ENCODE measurements at regions of chr1 and their contacts with region 1.

Region 1: GRCh38 chr1:198157241-198157846 is 546 bp downstream of the NEK7 start:
- DNase-seq: peak; percentile 87
- ATAC-seq: peak; percentile 50
- H3K4me3 ChIP-seq: peak overlapping the region; percentile 81
- H3K27ac ChIP-seq: peak overlapping the region; percentile 38
- H3K4me1 ChIP-seq: peaks cover 32% of the 10 kb centered on the region
- H3K27me3 ChIP-seq: no peaks in the 10 kb centered on the region
- CTCF ChIP-seq: no peak

Region 2: GRCh38 chr1:197775282-197776262 is 381.8 kb before region 1 on chr1 and contains the start of gene DENND1B:
- CTCF ChIA-PET with region 1: interaction called, 4 read pairs
- POLR2A ChIA-PET with region 1: no interaction called
- intact Hi-C with region 1: loop called (anchors 5 kb)
- DNase-seq: peak; percentile 66
- ATAC-seq: peak; percentile 52
- H3K4me3 ChIP-seq: peak within 1 kb of the TSS; percentile 75
- H3K27ac ChIP-seq: peak within 1 kb of the TSS; percentile 97
- H3K4me1 ChIP-seq: peaks cover 33% of the 10 kb centered on the region
- H3K27me3 ChIP-seq: no peaks in the 10 kb centered on the region
- CTCF ChIP-seq: no peak
- total RNA-seq, gene DENND1B: 7.4 and 10.9 TPM in 2 replicates

Region 3: DNA sequence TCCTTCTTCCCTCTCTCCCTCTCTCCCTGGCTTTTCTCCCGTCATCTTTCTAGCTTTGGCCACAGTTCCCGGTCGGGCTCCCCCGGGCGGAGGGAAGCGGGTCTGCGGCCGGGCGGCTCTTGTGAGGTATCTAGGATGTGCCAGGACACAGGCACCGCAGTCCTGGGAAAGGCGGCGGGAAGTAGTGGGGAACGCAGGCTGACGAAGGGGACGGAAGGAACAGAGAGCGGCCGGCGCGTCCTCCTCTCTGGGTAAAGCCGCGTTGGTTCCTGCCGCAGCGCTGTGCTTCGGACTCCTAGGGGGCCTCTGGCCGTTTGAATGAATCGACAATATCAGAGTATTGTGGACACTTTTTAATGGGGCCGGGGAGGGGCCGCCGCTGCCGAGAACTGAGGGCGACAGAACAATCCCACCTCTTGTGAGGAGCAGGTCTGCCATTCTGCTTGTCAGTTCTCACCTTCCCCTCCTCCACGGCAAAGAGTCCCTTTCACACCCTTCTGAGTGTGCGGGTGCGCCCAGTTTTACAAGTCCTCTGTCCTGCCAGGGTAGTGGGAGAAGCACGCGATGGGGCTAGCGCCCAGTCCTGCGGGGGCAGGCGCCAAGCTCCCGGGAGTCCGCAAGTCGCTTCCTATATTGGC is 241.4 kb before region 1 on chr1:
- CTCF ChIA-PET with region 1: no interaction called
- POLR2A ChIA-PET with region 1: no interaction called
- intact Hi-C with region 1: loop called (anchors 5 kb)
- DNase-seq: peak; percentile 79
- ATAC-seq: peak; percentile 83
- H3K4me3 ChIP-seq: peak overlapping the region; percentile 81
- H3K27ac ChIP-seq: no peak overlapping the region
- H3K4me1 ChIP-seq: peaks cover 4% of the 10 kb centered on the region; the same call in 1 of the 2 replicates
- H3K27me3 ChIP-seq: no peaks in the 10 kb centered on the region
- CTCF ChIP-seq: peak; percentile 70

Region 4: DNA sequence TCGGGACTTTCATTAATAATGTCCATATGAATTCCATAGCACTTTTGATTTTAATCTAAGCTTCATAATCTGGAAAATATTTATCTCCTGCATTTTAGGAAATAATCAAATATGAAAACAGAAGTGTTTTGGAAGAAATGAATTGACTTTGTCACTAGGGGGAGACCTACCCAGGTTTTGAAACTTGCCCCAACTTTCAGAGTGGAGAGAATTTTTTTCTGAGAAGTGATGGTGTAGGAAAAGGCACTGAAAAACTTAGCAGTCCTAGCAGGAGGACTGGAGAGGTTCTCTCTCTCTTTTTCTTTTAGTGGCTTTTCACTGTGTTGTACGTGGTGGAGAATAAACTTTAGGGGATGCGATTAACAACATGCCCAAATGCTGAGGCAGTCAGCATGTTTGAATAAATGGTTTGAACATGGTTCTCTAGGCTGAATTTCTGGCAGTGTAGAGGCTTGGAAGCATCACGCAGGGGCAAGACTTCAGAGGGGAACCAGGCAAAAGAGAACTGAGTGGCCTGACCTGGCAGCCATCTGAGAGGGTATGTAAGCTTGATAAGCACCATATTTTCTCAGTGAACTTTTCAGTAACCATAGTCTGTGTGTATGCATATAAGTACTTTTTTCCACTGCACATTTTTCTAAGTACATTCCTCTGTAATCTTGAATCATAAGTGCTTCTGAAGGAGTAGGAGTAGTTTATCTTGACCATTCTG is 68.8 kb before region 1 on chr1:
- CTCF ChIA-PET with region 1: no interaction called
- POLR2A ChIA-PET with region 1: no interaction called
- intact Hi-C with region 1: loop called (anchors 2 kb)
- DNase-seq: peak; percentile 56
- ATAC-seq: peak; percentile 55
- H3K4me3 ChIP-seq: no peak overlapping the region
- H3K27ac ChIP-seq: no peak overlapping the region
- H3K4me1 ChIP-seq: no peaks in the 10 kb centered on the region
- H3K27me3 ChIP-seq: no peaks in the 10 kb centered on the region
- CTCF ChIP-seq: peak; percentile 78

Region 5: GRCh38 chr1:198118134-198118533 is 39.2 kb before region 1 on chr1:
- CTCF ChIA-PET with region 1: no interaction called
- POLR2A ChIA-PET with region 1: no interaction called
- intact Hi-C with region 1: no loop called
- DNase-seq: peak; percentile 6
- ATAC-seq: no peak
- H3K4me3 ChIP-seq: no peak overlapping the region
- H3K27ac ChIP-seq: no peak overlapping the region
- H3K4me1 ChIP-seq: peaks cover 32% of the 10 kb centered on the region
- H3K27me3 ChIP-seq: no peaks in the 10 kb centered on the region
- CTCF ChIP-seq: no peak

Region 6: GRCh38 chr1:198132060-198132781 is 25.1 kb before region 1 on chr1:
- CTCF ChIA-PET with region 1: no interaction called
- POLR2A ChIA-PET with region 1: no interaction called
- intact Hi-C with region 1: loop called (anchors 1 kb)
- DNase-seq: peak; percentile 22
- ATAC-seq: peak; percentile 81
- H3K4me3 ChIP-seq: no peak overlapping the region
- H3K27ac ChIP-seq: no peak overlapping the region
- H3K4me1 ChIP-seq: peaks cover 6% of the 10 kb centered on the region; the same call in 1 of the 2 replicates
- H3K27me3 ChIP-seq: no peaks in the 10 kb centered on the region
- CTCF ChIP-seq: no peak

Region 7: DNA sequence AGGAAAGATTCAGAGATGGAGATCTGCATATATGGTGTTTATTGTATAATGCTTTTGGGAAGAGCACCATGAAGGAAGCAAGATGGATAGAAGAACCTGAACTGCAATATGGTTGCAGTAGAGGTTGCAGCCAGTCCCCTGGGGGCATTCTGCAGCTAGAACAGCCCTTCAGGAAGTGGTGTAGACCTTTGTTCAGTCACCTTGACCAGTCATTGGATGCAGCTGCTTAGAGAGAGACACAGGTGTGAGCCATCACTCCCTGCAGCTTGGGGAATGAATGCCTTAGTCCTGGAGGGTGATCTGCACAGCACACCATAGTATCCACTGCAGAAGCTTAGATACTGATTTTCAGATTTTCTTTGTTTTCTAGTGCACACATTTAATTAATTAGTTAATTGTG is 41.8 kb after region 1 on chr1:
- CTCF ChIA-PET with region 1: no interaction called
- POLR2A ChIA-PET with region 1: no interaction called
- intact Hi-C with region 1: no loop called
- DNase-seq: no peak
- ATAC-seq: no peak
- H3K4me3 ChIP-seq: no peak overlapping the region
- H3K27ac ChIP-seq: no peak overlapping the region
- H3K4me1 ChIP-seq: no peaks in the 10 kb centered on the region
- H3K27me3 ChIP-seq: no peaks in the 10 kb centered on the region
- CTCF ChIP-seq: no peak

Region 8: GRCh38 chr1:198253668-198254067 is 96.3 kb after region 1 on chr1:
- CTCF ChIA-PET with region 1: no interaction called
- POLR2A ChIA-PET with region 1: no interaction called
- intact Hi-C with region 1: loop called (anchors 5 kb)
- DNase-seq: peak; percentile 52
- ATAC-seq: peak; percentile 75
- H3K4me3 ChIP-seq: no peak overlapping the region
- H3K27ac ChIP-seq: peak overlapping the region; percentile 21; the same call in 1 of the 2 replicates
- H3K4me1 ChIP-seq: peaks cover 24% of the 10 kb centered on the region
- H3K27me3 ChIP-seq: no peaks in the 10 kb centered on the region
- CTCF ChIP-seq: no peak

Region 9: DNA sequence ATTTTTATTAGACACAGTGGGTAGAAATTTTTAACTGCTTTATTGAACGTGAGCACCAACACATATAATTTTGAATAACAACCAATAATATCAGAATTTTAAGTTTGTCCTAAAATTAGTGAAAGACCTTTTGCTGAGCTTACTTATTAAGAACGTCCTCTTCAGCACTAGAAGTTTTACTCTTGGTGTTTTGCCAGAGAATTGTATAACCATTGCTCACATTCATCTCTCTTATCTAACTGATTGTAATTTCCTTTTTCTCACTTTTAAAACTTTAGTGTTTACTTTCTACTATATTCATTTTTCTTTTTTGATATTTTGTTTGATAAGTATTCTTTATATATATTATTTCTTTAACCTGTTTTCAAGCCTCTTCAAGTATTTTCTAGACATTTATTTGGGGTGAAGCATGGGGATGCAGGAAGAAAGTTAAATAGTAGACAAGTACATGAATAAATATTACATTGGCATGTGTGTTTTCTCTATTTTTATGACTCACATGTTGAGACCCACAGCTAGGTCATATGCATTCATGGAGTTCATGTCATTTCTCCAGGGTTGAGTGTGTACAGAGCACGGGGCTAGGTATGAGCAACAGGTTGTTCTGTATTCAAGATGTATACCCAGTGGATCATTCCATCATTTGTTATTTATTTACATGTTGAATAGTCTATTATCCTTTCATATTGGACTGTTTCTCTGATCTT is 292.5 kb after region 1 on chr1:
- CTCF ChIA-PET with region 1: no interaction called
- POLR2A ChIA-PET with region 1: no interaction called
- intact Hi-C with region 1: loop called (anchors 5 kb)
- DNase-seq: peak; percentile 61
- ATAC-seq: peak; percentile 40
- H3K4me3 ChIP-seq: peak overlapping the region; percentile 46; the same call in 1 of the 2 replicates
- H3K27ac ChIP-seq: peak overlapping the region; percentile 71
- H3K4me1 ChIP-seq: peaks cover 31% of the 10 kb centered on the region
- H3K27me3 ChIP-seq: no peaks in the 10 kb centered on the region
- CTCF ChIP-seq: no peak

Region 10: DNA sequence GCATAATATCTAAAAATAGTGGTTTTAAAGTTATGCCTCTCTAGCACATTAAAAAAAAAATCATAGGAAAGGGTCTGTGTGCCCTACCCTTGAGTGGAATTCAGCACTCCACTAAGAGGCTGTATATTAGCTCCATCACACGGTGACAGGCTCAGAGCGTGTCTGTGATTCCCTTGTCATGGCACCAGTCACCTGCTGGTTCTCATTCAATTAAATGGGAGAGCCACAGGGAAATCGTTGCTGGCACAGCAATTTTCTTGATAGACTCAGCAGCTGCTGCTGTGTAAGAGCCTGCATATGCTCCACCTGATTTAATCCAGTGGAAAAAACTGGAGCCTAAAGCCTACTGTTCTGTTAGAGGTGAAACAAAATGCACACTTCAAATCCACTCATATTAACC is 373.6 kb after region 1 on chr1:
- CTCF ChIA-PET with region 1: no interaction called
- POLR2A ChIA-PET with region 1: no interaction called
- intact Hi-C with region 1: no loop called
- DNase-seq: no peak
- ATAC-seq: no peak
- H3K4me3 ChIP-seq: no peak overlapping the region
- H3K27ac ChIP-seq: no peak overlapping the region
- H3K4me1 ChIP-seq: peaks cover 30% of the 10 kb centered on the region
- H3K27me3 ChIP-seq: no peaks in the 10 kb centered on the region
- CTCF ChIP-seq: no peak